PC-3 (cell line): ENCODE measurements at regions of chr7 and their contacts with region 1.

Region 1: DNA sequence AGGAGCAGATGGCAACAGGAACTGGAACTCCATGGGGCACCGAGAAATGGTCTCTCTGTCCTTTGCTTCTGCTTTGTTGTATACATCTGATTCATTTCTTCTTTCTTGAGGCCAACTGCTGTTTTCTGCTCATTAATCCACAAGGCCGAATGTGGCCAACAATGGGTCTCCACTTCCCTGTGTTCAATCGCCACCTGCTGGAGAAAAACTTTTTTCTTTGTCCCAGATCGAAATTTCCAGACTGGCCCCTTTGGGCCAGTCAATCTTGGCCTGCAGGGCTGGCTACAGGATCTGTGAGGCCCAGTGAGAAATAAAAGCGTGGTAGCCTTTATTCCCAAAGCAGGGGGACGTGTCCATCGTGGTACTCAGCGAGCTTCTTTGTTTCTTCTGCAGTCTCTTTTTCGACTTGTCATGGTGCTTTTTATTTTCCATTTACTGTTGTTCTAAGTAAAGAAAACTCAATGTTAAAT is 58.8 kb downstream of the PARP12 start:
- DNase-seq: peak; percentile 86
- ATAC-seq: peak; percentile 75
- H3K4me3 ChIP-seq: no peak overlapping the region
- H3K27ac ChIP-seq: no peak overlapping the region
- H3K4me1 ChIP-seq: no peaks in the 10 kb centered on the region
- H3K27me3 ChIP-seq: no peaks in the 10 kb centered on the region
- CTCF ChIP-seq: peak; percentile 84

Region 2: GRCh38 chr7:139431010-139431409 is 572.9 kb before region 1 on chr7:
- CTCF ChIA-PET with region 1: no interaction called
- POLR2A ChIA-PET with region 1: no interaction called
- intact Hi-C with region 1: loop called (anchors 10 kb)
- DNase-seq: peak; percentile 93
- ATAC-seq: peak; percentile 69
- H3K4me3 ChIP-seq: no peak overlapping the region
- H3K27ac ChIP-seq: peak overlapping the region; percentile 59
- H3K4me1 ChIP-seq: peaks cover 16% of the 10 kb centered on the region
- H3K27me3 ChIP-seq: no peaks in the 10 kb centered on the region
- CTCF ChIP-seq: no peak

Region 3: DNA sequence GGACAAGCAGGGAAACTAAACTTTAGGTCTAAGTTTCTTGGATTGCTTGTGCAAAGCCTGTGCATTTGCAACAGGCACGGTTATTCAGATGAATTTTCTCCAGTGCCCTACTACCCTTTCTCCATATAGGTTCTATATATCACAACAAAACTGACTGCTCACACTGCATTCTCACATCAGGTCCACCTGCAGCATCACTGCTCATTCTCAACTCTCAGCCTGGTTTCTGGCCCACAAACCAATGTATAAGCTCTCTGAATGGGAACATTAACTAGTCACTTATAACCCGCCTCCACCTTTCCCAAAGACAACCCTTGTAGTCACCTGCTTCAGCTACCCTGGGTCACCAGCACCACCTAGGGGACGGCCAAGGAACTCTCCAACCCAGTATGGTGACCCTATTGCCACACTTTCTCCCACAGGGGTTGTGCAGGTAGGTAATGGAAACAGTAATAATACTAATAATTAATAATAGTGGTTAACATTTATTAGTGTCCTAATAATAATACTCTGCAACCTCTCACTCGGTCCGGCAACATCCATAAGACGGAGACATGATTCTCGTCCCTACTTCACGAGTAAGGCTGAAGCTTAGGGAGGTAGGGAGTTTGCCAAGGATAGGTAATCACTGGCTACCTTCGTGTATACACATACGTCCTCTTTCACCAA is 383.1 kb before region 1 on chr7:
- CTCF ChIA-PET with region 1: interaction called, 6 read pairs
- POLR2A ChIA-PET with region 1: no interaction called
- intact Hi-C with region 1: loop called (anchors 1 kb)
- DNase-seq: peak; percentile 57
- ATAC-seq: peak; percentile 60
- H3K4me3 ChIP-seq: no peak overlapping the region
- H3K27ac ChIP-seq: no peak overlapping the region
- H3K4me1 ChIP-seq: peaks cover 12% of the 10 kb centered on the region
- H3K27me3 ChIP-seq: no peaks in the 10 kb centered on the region
- CTCF ChIP-seq: peak; percentile 73

Region 4: DNA sequence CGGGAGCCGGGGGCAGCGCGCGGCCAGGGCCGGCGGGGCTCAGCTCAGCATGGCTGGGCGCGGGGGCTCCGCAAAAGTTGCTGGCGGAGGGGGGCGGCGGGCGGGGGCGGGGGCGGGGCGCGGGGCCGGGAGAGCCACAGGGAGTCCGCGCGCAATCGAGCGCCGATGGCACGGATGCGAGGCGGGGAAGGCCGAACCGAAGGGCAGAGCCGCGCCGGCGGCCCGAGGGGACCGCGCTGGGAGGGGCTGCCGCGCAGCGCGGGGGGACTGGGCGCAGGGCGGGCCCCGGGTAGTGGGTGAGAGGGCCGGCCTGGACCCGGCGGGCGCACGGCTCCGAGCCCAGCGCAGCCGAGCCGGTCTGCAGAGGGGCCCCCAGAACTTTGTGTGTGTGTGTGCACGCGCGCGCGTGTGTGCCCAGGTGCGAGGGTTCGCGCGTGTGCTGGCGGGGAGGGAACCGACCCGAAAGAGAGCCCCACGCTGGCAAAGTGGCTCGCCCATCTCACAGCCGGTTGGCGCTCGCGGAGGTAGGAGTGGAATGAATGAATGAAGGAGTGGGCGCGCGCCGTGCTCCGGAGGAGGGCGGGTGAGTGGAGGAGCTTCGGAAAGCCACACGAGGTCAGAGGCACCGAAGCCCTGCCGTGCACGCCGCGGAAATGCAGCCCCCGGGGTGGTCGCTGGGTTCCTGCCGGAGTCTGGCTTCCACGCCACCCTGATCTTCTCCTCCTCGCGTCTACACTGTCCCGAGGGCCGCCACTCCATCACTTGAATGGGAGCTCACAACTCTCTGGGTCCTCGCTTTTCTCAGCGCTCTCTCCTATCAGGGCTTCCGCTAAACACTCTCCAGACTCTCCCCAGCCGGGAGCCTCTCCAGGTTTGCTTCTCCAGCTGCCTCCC is 225.8 kb before region 1 on chr7 and contains the start of gene HIPK2:
- CTCF ChIA-PET with region 1: interaction called, 4 read pairs
- POLR2A ChIA-PET with region 1: no interaction called
- intact Hi-C with region 1: loop called (anchors 1 kb)
- DNase-seq: peak; percentile 81
- ATAC-seq: peak; percentile 48
- H3K4me3 ChIP-seq: peak within 1 kb of the TSS; percentile 84
- H3K27ac ChIP-seq: peak within 1 kb of the TSS; percentile 99
- H3K4me1 ChIP-seq: peaks cover 46% of the 10 kb centered on the region
- H3K27me3 ChIP-seq: no peaks in the 10 kb centered on the region
- CTCF ChIP-seq: no peak
- total RNA-seq, gene HIPK2: 38.1 and 46.0 TPM in 2 replicates

Region 5: GRCh38 chr7:139976838-139977656 is 26.9 kb before region 1 on chr7:
- CTCF ChIA-PET with region 1: no interaction called
- POLR2A ChIA-PET with region 1: no interaction called
- intact Hi-C with region 1: no loop called
- DNase-seq: no peak
- ATAC-seq: no peak
- H3K4me3 ChIP-seq: no peak overlapping the region
- H3K27ac ChIP-seq: no peak overlapping the region
- H3K4me1 ChIP-seq: no peaks in the 10 kb centered on the region
- H3K27me3 ChIP-seq: no peaks in the 10 kb centered on the region
- CTCF ChIP-seq: no peak

Region 6: GRCh38 chr7:140062528-140063299 is 58.8 kb after region 1 on chr7 and contains the start of gene PARP12:
- CTCF ChIA-PET with region 1: interaction called, 4 read pairs
- POLR2A ChIA-PET with region 1: interaction called, 6 read pairs
- intact Hi-C with region 1: loop called (anchors 2 kb)
- DNase-seq: peak; percentile 70
- ATAC-seq: peak; percentile 50
- H3K4me3 ChIP-seq: peak within 1 kb of the TSS; percentile 80
- H3K27ac ChIP-seq: peak within 1 kb of the TSS; percentile 95
- H3K4me1 ChIP-seq: peaks cover 41% of the 10 kb centered on the region
- H3K27me3 ChIP-seq: no peaks in the 10 kb centered on the region
- CTCF ChIP-seq: no peak
- total RNA-seq, gene PARP12: 25.5 and 28.1 TPM in 2 replicates

Region 7: DNA sequence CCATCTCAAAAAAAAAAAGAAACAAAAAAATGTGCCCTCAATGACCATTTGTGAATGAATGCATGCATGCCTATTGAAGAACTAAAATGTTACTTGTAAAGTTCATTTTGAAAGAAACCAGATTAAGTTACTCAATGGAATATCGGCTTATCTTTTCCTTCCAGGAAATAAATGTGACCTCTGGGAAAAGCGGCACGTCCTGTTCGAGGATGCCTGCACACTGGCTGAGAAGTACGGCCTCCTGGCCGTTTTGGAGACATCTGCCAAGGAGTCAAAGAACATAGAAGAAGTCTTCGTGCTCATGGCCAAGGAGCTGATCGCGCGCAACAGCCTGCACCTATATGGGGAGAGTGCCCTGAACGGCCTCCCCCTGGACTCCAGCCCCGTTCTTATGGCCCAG is 421.8 kb after region 1 on chr7:
- CTCF ChIA-PET with region 1: no interaction called
- POLR2A ChIA-PET with region 1: no interaction called
- intact Hi-C with region 1: no loop called
- DNase-seq: no peak
- ATAC-seq: no peak
- H3K4me3 ChIP-seq: no peak overlapping the region
- H3K27ac ChIP-seq: no peak overlapping the region
- H3K4me1 ChIP-seq: no peaks in the 10 kb centered on the region
- H3K27me3 ChIP-seq: no peaks in the 10 kb centered on the region
- CTCF ChIP-seq: no peak